ENCODE measurements at regions of chr1 and their contacts with region 1.

Region 1: DNA sequence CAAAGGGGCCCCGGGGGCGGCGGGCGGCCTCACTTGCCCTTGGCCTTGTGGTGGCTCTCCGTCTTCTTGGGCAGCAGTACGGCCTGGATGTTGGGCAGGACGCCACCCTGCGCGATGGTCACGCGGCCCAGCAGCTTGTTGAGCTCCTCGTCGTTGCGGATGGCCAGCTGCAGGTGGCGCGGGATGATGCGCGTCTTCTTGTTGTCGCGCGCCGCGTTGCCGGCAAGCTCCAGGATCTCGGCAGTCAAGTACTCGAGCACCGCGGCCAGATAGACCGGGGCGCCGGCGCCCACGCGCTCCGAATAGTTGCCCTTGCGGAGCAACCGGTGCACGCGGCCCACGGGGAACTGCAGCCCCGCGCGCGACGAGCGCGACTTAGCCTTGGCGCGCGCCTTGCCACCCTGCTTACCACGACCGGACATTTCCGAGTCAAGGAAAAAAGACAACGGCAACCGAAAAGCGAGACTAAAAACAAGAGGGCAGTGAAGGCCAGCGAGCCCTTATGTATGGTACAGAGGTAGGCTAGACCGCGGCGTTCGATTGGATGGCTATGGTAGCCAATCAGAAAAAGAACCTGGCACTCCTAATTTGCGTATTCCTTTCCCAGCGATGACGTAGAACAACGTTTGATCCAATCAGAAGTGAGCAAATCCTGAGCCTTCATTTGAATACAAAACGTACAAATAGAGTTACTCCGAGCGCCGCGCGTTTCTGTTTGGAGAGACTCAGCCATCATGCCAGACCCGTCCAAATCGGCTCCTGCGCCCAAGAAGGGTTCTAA is 29.6 kb upstream of the RNF187 start:
- DNase-seq: peak; percentile 99
- ATAC-seq: peak; percentile 92
- H3K4me3 ChIP-seq: peak overlapping the region; percentile 50
- H3K27ac ChIP-seq: peak overlapping the region; percentile 50
- H3K4me1 ChIP-seq: 0 out of 2 replicates have a peak, but pooled peaks cover 2% of the 10 kb centered on the region
- H3K27me3 ChIP-seq: no peaks in the 10 kb centered on the region
- CTCF ChIP-seq: peak; percentile 49
- POLR2A ChIP-seq: peak; percentile 96
- RAD21 ChIP-seq: no peak; the same call in 1 of the 2 replicates

Region 2: GRCh38 chr1:228212966-228213844 is 244.4 kb before region 1 on chr1:
- CTCF ChIA-PET with region 1: no interaction called
- POLR2A ChIA-PET with region 1: no interaction called
- dilution Hi-C with region 1: no loop called
- in situ Hi-C with region 1: no loop called
- intact Hi-C with region 1: loop called (anchors 5 kb)
- DNase-seq: peak; percentile 78
- ATAC-seq: peak; percentile 96
- H3K4me3 ChIP-seq: peak overlapping the region; percentile 92
- H3K27ac ChIP-seq: peak overlapping the region; percentile 93
- H3K4me1 ChIP-seq: peaks cover 10% of the 10 kb centered on the region; the same call in 1 of the 2 replicates
- H3K27me3 ChIP-seq: no peaks in the 10 kb centered on the region; the same call in 1 of the 2 replicates
- CTCF ChIP-seq: peak; percentile 74
- POLR2A ChIP-seq: no peak
- RAD21 ChIP-seq: peak; percentile 67

Region 3: DNA sequence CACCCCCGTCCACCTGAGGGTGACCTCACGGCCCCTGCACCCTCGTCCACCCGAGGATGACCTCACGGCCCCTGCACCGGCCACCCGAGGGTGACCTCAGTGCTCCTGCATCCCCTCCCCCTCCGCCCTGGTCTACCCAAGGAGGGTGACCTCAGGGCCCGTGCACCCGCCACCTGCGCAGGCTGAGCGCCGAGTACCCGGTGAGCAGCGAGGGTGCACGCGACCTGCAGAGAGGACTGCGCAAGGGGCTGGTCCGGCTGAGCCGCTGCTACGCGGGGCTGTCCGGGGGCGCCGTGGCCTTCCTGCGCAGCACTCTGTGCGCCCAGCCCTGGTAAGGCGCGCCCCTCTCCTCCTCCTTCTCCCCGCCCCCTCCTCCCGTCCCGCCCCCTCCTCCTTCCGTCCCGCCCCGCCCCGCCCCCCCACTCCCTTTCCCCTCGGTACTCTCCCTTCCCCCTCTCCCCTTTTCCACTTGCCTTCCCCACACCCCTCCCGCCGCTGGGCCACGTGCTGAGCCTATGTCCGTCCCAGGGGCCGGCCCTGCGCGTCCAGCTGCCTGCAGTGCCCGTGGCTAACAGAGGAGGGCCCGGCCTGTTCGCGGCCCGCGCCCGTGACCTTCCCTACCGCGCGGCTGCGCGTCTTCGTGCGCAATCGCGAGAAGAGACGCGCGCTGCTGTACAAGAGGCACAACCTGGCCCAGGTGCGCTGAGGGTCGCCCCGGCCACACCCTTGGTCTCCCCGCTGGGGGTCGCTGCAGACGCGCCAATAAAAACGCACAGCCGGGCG is 79.3 kb before region 1 on chr1:
- CTCF ChIA-PET with region 1: no interaction called
- POLR2A ChIA-PET with region 1: no interaction called
- dilution Hi-C with region 1: no loop called
- in situ Hi-C with region 1: no loop called
- intact Hi-C with region 1: loop called (anchors 5 kb)
- DNase-seq: peak; percentile 69
- ATAC-seq: peak; percentile 79
- H3K4me3 ChIP-seq: peak overlapping the region; percentile 35
- H3K27ac ChIP-seq: no peak overlapping the region; the same call in 1 of the 2 replicates
- H3K4me1 ChIP-seq: peaks cover 18% of the 10 kb centered on the region; the same call in 1 of the 2 replicates
- H3K27me3 ChIP-seq: no peaks in the 10 kb centered on the region
- CTCF ChIP-seq: peak; percentile 51
- POLR2A ChIP-seq: no peak
- RAD21 ChIP-seq: peak; percentile 41

Region 4: GRCh38 chr1:228434686-228435085 is 22.9 kb before region 1 on chr1:
- CTCF ChIA-PET with region 1: no interaction called
- POLR2A ChIA-PET with region 1: interaction called, 12 read pairs
- dilution Hi-C with region 1: no loop called
- in situ Hi-C with region 1: no loop called
- intact Hi-C with region 1: no loop called
- DNase-seq: no peak
- ATAC-seq: no peak
- H3K4me3 ChIP-seq: no peak overlapping the region
- H3K27ac ChIP-seq: no peak overlapping the region
- H3K4me1 ChIP-seq: no peaks in the 10 kb centered on the region
- H3K27me3 ChIP-seq: peaks cover 17% of the 10 kb centered on the region
- CTCF ChIP-seq: no peak
- POLR2A ChIP-seq: no peak
- RAD21 ChIP-seq: no peak

Measured in IMR-90 (cell line).